ENCODE measurements at regions of chr4 and their contacts with region 1.

Region 1: DNA sequence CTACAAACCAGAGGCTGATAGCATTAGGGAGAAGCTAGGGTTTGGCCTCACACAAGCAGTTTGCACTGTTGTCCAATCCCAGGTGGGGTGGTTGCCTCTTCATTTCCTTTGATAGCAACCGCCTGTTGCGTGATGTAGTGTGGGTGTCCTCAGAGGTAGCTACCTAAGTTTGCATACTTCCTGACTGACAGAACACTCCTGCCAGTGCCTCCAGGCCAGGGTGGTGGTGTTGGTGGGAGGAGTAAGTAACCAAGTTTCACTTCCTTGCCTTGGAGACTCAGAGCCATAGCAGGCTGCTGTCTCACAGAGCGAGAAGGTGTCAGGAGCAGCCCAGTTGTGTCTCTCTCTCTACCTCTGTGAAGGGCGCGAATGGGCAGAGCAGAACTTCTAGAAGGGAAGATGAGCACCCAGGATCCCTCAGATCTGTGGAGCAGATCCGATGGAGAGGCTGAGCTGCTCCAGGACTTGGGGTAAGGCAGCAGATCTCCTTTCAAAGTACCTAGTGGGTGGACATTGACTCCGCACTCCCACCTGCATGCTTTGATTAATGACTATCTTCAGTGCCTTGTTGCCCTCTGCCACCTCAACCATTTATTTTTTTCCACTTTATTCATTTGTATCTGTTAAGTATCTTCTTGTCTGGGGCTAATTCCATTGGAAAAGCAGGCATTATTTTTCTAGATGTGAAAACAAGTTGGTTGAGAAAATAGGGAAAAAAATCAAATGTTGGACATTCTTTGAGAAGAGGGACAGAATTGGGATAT is at the start of gene DAPP1:
- DNase-seq: peak; percentile 94
- ATAC-seq: peak; percentile 88
- H3K4me3 ChIP-seq: peak within 1 kb of the TSS; percentile 95
- H3K27ac ChIP-seq: peak within 1 kb of the TSS; percentile 85
- H3K4me1 ChIP-seq: peaks cover 19% of the 10 kb centered on the region
- H3K27me3 ChIP-seq: no peaks in the 10 kb centered on the region
- CTCF ChIP-seq: no peak
- EP300 ChIP-seq: peak; percentile 65 to 71; a peak in 3 of 4 replicates
- POLR2A ChIP-seq: peak; percentile 98
- RAD21 ChIP-seq: no peak
- polyA plus RNA-seq, gene DAPP1: 104 to 147 TPM

Region 2: GRCh38 chr4:99293357-99293756 is 523.4 kb before region 1 on chr4:
- CTCF ChIA-PET with region 1: no interaction called
- POLR2A ChIA-PET with region 1: no interaction called
- RAD21 ChIA-PET with region 1: no interaction called
- SMC1A ChIA-PET with region 1: no interaction called
- in situ Hi-C with region 1: no loop called
- intact Hi-C with region 1: no loop called
- DNase-seq: no peak
- ATAC-seq: no peak
- H3K4me3 ChIP-seq: no peak overlapping the region
- H3K27ac ChIP-seq: no peak overlapping the region
- H3K4me1 ChIP-seq: no peaks in the 10 kb centered on the region
- H3K27me3 ChIP-seq: no peaks in the 10 kb centered on the region
- CTCF ChIP-seq: no peak
- EP300 ChIP-seq: no peak
- POLR2A ChIP-seq: no peak
- RAD21 ChIP-seq: no peak

Region 3: DNA sequence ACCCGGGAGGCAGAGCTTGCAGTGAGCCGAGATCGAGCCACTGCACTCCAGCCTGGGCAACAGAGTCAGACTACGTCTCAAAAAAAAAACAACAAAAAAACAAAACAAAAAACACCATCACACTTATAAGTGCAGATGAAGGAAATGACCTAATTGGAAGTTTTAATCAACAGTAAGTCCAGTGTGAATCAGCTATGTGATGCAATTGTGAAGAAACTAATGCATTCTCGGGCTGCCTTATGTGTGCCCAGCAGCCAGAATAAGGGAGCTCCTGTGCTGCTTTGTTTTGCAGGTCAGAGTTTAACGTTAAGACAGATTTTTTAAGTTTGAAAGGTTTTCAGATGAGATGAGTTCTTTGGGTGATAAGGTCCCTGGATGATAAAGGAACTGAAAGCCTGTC is 10.7 kb after region 1 on chr4:
- CTCF ChIA-PET with region 1: interaction called, 62 read pairs
- POLR2A ChIA-PET with region 1: interaction called, 5 read pairs
- RAD21 ChIA-PET with region 1: interaction called, 13 read pairs
- SMC1A ChIA-PET with region 1: interaction called, 19 read pairs
- in situ Hi-C with region 1: no loop called
- intact Hi-C with region 1: no loop called
- DNase-seq: no peak
- ATAC-seq: peak; percentile 3; the same call in 1 of the 3 replicates
- H3K4me3 ChIP-seq: no peak overlapping the region
- H3K27ac ChIP-seq: no peak overlapping the region
- H3K4me1 ChIP-seq: peaks cover 9% of the 10 kb centered on the region; the same call in 1 of the 2 replicates
- H3K27me3 ChIP-seq: no peaks in the 10 kb centered on the region
- CTCF ChIP-seq: no peak
- EP300 ChIP-seq: no peak
- POLR2A ChIP-seq: no peak
- RAD21 ChIP-seq: no peak

Region 4: GRCh38 chr4:99855678-99856077 is 39.0 kb after region 1 on chr4:
- CTCF ChIA-PET with region 1: interaction called, 23 read pairs
- POLR2A ChIA-PET with region 1: interaction called, 30 read pairs
- RAD21 ChIA-PET with region 1: interaction called, 43 read pairs
- SMC1A ChIA-PET with region 1: interaction called, 55 read pairs
- in situ Hi-C with region 1: no loop called
- intact Hi-C with region 1: loop called (anchors 1 kb)
- DNase-seq: peak; percentile 53
- ATAC-seq: peak; percentile 28
- H3K4me3 ChIP-seq: no peak overlapping the region
- H3K27ac ChIP-seq: peak overlapping the region; percentile 58; the same call in 1 of the 2 replicates
- H3K4me1 ChIP-seq: peaks cover 43% of the 10 kb centered on the region
- H3K27me3 ChIP-seq: no peaks in the 10 kb centered on the region
- CTCF ChIP-seq: no peak
- EP300 ChIP-seq: 0 out of 4 replicates have a peak, but pooled peaks of 1 of the 2 experiments have one; percentile 9
- POLR2A ChIP-seq: no peak
- RAD21 ChIP-seq: no peak

Region 5: DNA sequence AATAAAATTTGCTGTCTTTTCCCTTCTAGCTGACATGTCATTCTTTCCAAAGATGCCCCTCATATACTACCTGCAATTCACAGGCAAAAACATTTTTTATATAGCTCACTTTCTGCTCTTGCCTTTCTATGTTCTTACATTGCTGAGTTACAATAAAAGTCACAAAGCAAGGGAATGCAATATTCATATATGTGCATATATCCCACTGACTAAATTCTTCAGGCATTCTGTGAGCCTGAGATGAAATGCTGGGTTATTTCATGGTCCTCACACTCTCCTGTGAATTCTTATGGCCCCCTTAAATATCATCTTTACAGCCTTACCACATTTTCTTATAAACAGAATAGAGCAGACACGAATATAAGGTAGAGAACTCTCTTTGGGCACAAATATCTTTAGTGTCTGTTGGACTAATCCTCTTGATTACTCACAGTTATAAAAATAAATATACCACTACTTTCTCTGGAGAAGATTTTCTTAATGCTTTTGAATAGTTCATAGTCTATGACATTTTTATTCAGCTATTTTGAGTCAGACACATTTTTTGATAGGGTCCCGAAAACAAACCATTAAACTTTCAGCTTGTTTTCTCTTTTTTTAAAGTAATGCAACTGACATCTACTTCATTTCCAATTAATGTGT is 217.4 kb after region 1 on chr4:
- CTCF ChIA-PET with region 1: no interaction called
- POLR2A ChIA-PET with region 1: no interaction called
- RAD21 ChIA-PET with region 1: no interaction called
- SMC1A ChIA-PET with region 1: no interaction called
- in situ Hi-C with region 1: no loop called
- intact Hi-C with region 1: no loop called
- DNase-seq: no peak
- ATAC-seq: no peak
- H3K4me3 ChIP-seq: no peak overlapping the region
- H3K27ac ChIP-seq: no peak overlapping the region
- H3K4me1 ChIP-seq: no peaks in the 10 kb centered on the region
- H3K27me3 ChIP-seq: no peaks in the 10 kb centered on the region
- CTCF ChIP-seq: no peak
- EP300 ChIP-seq: no peak
- POLR2A ChIP-seq: no peak
- RAD21 ChIP-seq: no peak

Measured in GM12878 (cell line).